ENCODE measurements at regions of chr17 and their contacts with region 1.

Region 1: GRCh38 chr17:17752089-17752820 is 71.0 kb downstream of the RAI1 start:
- DNase-seq: peak; percentile 93
- ATAC-seq: peak; percentile 85
- H3K4me3 Mint-ChIP-seq: peak overlapping the region; percentile 86
- H3K27ac Mint-ChIP-seq: peak overlapping the region; percentile 98
- H3K4me1 Mint-ChIP-seq: peaks cover 88% of the 10 kb centered on the region
- H3K27me3 Mint-ChIP-seq: no peaks in the 10 kb centered on the region
- CTCF ChIP-seq: no peak

Region 2: DNA sequence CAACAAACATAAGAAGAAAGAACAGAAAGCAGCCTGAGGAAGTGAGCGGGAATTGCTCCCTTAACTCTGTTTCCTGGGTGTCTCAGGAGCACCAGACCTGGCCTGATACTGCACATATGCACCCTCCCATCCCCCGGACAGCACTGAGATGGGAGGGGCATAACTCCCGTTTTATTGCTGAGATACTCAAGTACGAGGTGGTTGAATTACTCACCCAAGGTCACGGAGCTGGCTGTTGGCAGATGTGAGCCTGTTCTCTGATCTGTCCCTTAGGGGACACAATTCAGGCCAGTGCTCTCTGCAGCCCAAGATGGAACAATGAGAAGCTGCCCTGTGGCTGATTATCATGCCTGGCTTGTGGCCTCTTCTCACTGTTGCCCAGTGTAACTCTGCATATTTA is 284.5 kb before region 1 on chr17:
- CTCF ChIA-PET with region 1: no interaction called
- POLR2A ChIA-PET with region 1: no interaction called
- intact Hi-C with region 1: no loop called
- DNase-seq: no peak
- ATAC-seq: no peak
- H3K4me3 Mint-ChIP-seq: no peak overlapping the region
- H3K27ac Mint-ChIP-seq: no peak overlapping the region
- H3K4me1 Mint-ChIP-seq: no peaks in the 10 kb centered on the region
- H3K27me3 Mint-ChIP-seq: peaks cover 24% of the 10 kb centered on the region
- CTCF ChIP-seq: no peak

Region 3: DNA sequence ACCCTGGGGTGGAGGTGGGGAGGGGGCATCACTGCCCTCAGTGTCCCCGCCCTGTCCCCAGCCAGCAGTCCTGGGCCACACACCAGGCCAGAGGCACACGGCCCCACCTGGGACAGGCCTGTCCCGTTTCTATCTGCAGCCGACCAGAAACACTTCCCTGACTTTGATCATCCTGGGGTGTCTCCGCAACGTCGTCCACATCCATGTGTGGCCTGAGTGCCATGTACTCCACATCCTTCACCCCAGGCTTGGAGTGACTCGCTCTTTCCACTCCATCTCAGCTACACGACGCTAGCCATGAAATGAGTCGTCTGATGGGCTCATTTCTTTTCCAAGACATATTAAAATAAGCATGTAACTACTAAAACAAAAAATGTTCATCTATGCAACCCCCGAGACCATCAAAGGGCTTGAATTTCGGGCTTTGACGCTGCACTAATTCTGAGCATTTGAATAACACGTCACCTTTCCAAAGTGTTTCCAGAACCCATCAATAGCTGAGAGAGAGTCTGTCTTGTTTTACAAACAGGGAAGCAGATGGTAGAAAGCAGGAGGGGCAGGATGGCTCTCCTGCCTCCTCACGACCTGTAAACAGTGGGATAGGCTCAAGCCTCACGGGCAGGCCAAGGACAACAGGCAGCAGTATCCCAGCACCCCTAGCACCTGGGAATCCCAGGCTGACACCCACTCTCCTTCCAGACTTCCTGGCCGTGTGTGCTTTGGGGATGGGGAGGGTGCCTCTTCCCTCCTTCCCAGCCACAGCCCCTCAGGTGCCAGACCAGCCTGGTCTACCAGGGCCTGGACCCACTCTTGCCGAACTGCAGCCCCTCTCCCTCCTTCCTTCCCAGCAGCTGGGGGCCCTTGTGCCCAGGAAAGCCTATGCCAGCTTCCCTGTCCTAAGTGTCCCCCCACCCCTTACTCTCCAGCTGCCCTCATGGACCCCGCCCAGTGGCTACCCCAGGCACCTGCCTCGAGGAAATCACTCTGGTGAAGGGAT is 236.0 kb before region 1 on chr17:
- CTCF ChIA-PET with region 1: no interaction called
- POLR2A ChIA-PET with region 1: no interaction called
- intact Hi-C with region 1: no loop called
- DNase-seq: no peak
- ATAC-seq: no peak
- H3K4me3 Mint-ChIP-seq: no peak overlapping the region
- H3K27ac Mint-ChIP-seq: no peak overlapping the region
- H3K4me1 Mint-ChIP-seq: no peaks in the 10 kb centered on the region
- H3K27me3 Mint-ChIP-seq: no peaks in the 10 kb centered on the region
- CTCF ChIP-seq: no peak

Region 4: GRCh38 chr17:17681187-17681848 is 70.9 kb before region 1 on chr17 and contains the start of gene RAI1:
- CTCF ChIA-PET with region 1: interaction called, 3 read pairs
- POLR2A ChIA-PET with region 1: interaction called, 14 read pairs
- intact Hi-C with region 1: loop called (anchors 1 kb)
- DNase-seq: peak; percentile 84
- ATAC-seq: peak; percentile 63
- H3K4me3 Mint-ChIP-seq: peak within 1 kb of the TSS; percentile 91
- H3K27ac Mint-ChIP-seq: peak within 1 kb of the TSS; percentile 81
- H3K4me1 Mint-ChIP-seq: peaks cover 24% of the 10 kb centered on the region
- H3K27me3 Mint-ChIP-seq: no peaks in the 10 kb centered on the region
- CTCF ChIP-seq: no peak
- total RNA-seq, gene RAI1: 26.7 and 31.2 TPM in 2 replicates

Region 5: DNA sequence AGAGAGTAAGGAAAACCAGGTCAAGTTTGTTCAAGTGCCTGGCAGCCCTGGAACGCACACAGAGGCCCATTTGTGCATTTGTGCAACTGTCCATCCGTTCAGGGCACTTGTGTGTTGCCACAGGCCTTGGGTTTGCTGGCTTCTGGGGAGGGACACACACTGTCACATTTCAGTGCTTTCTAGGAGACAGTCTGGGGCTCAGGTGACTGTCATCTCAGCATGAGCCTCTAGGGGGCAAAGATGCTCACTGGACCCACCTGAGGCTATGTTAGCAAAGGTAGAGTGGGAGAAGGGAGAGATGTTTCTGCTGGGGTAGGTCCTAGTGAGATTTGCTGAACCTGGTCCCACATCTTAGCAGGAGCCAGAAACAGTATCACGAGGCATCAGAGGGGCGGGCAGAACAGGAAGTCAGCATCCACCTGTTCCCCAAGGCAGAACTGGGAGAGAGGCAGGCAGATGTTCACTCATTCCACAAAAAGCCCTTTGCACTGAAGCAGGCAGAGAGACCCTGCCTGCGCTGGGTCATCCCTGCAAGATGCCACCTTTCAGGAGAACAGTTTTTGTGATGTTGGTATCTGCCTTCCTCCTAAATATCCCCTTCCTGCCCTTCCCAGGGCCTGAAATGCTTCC is 22.5 kb before region 1 on chr17:
- CTCF ChIA-PET with region 1: no interaction called
- POLR2A ChIA-PET with region 1: interaction called, 3 read pairs
- intact Hi-C with region 1: loop called (anchors 2 kb)
- DNase-seq: no peak
- ATAC-seq: peak; percentile 93
- H3K4me3 Mint-ChIP-seq: no peak overlapping the region
- H3K27ac Mint-ChIP-seq: no peak overlapping the region
- H3K4me1 Mint-ChIP-seq: peaks cover 16% of the 10 kb centered on the region
- H3K27me3 Mint-ChIP-seq: no peaks in the 10 kb centered on the region
- CTCF ChIP-seq: no peak

Region 6: GRCh38 chr17:17823433-17824118 is 71.3 kb after region 1 on chr17:
- CTCF ChIA-PET with region 1: no interaction called
- POLR2A ChIA-PET with region 1: interaction called, 4 read pairs
- intact Hi-C with region 1: loop called (anchors 1 kb)
- DNase-seq: peak; percentile 71
- ATAC-seq: peak; percentile 88
- H3K4me3 Mint-ChIP-seq: peak overlapping the region; percentile 78
- H3K27ac Mint-ChIP-seq: peak overlapping the region; percentile 30
- H3K4me1 Mint-ChIP-seq: peaks cover 62% of the 10 kb centered on the region
- H3K27me3 Mint-ChIP-seq: no peaks in the 10 kb centered on the region
- CTCF ChIP-seq: no peak

Region 7: DNA sequence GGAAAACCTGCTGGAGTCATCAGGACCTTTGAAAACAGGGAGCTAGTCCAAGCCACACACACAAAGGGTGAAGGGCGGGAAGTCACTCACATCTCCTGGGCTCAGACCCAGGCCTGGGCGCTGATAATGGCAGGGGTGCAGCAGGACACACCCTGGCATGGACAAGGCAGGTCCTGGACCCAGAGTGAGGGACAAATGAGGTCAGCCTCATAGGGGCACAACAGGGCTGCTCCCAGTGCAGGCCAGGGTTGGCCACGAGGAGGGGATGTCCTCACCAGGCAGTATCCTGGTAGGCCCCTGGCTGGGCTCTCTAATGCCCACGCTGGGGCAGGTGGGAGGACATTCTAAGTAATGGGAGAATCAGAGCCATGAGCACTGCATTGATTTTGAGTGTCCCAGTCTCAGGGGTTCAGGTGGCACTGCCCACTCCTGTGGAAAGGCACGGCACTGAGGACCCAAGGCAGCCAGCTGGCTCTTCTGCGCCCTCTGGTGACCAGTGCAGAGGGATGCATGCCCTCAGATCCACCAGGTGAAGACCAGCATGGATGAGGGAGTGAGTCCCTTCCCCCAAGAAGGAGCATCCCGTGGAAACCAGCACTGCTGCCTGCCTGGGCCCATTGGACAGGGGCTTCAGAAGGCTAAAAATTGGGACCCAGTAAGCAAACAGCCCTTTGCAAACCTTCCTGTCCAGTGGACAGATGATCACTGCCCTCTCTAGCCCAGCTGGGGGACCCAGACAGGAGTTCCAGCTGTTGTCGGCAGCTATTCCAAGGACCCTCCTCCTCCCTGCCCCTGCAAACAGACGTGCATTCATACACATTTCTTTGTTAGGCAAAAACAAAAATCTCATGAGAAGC is 107.9 kb after region 1 on chr17:
- CTCF ChIA-PET with region 1: no interaction called
- POLR2A ChIA-PET with region 1: no interaction called
- intact Hi-C with region 1: loop called (anchors 1 kb)
- DNase-seq: peak; percentile 65
- ATAC-seq: peak; percentile 99
- H3K4me3 Mint-ChIP-seq: no peak overlapping the region
- H3K27ac Mint-ChIP-seq: no peak overlapping the region
- H3K4me1 Mint-ChIP-seq: no peaks in the 10 kb centered on the region
- H3K27me3 Mint-ChIP-seq: no peaks in the 10 kb centered on the region
- CTCF ChIP-seq: peak; percentile 84

Region 8: GRCh38 chr17:18087610-18088491 is 335.6 kb after region 1 on chr17 and contains the start of gene DRG2:
- CTCF ChIA-PET with region 1: no interaction called
- POLR2A ChIA-PET with region 1: no interaction called
- intact Hi-C with region 1: loop called (anchors 5 kb)
- DNase-seq: peak; percentile 93
- ATAC-seq: peak; percentile 95
- H3K4me3 Mint-ChIP-seq: peak within 1 kb of the TSS; percentile 99
- H3K27ac Mint-ChIP-seq: peak within 1 kb of the TSS; percentile 95
- H3K4me1 Mint-ChIP-seq: peaks cover 26% of the 10 kb centered on the region
- H3K27me3 Mint-ChIP-seq: no peaks in the 10 kb centered on the region
- CTCF ChIP-seq: no peak
- total RNA-seq, gene DRG2: 55.7 and 67.1 TPM in 2 replicates

Measured in activated B cell treated with CpG ODN at 0.5 μM for 24 hours (primary cell).